Sigmoid colon (tissue), 7 donors: ENCODE measurements at regions of chr7 and their contacts with region 1.

Region 1: GRCh38 chr7:55415173-55415778 is 50.1 kb downstream of the LANCL2 start:
- DNase-seq: peak; percentile 81
- H3K4me3 ChIP-seq: no peak overlapping the region
- H3K27ac ChIP-seq: no peak overlapping the region
- H3K4me1 ChIP-seq: no peaks in the 10 kb centered on the region
- H3K27me3 ChIP-seq: no peaks in the 10 kb centered on the region
- CTCF ChIP-seq: peak; percentile 59 to 85 (median 70)
- EP300 ChIP-seq: no peak
- POLR2A ChIP-seq: no peak

Region 2: DNA sequence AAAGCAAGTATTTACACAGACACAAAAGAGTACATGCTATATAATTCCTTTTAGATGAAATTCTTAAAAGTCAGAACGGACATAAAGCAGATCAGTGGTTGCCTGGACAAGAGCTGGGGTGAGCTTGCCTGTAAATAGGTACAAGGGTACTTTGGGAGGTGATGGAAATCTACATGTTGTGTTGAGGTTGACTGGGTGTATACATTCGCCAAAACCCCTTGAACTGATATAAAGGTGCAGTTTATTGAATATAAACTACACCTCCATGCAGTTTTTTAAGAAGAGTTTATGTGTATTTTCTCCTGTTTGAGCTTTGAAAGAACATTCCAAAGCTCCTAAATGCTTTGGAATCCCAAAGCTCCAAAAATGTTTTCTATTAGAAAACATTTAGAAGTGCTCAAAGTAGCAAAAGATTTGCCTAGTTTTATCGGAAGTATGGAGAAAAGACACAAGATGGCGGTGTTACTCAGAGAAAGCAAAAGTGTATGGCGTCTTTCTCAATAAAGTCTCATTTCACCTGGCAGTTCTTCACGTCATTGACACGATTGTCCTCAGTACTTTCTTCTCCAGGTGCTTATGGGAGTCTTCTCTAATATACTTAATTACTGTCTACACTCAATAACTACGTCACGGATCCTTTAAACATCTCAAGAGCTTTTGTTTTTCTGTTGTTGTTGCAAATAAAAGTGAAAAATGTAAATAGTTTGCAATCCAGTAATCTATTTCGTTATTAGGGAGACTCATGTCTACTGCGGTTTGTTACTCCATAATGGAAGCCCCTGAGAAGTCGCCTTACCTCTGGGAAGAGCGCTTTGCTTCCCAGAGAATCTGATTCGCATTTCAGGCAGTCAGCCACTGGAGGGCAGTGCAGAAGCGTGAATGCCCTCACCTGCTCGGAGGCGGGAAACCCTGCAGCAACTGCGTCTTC is 641.5 kb before region 1 on chr7:
- intact Hi-C with region 1: loop called (anchors 10 kb)
- DNase-seq: peak; percentile 89
- H3K4me3 ChIP-seq: peak overlapping the region; percentile 7 to 42 (median 32)
- H3K27ac ChIP-seq: peak overlapping the region in 1 of 4 donors; percentile 28
- H3K4me1 ChIP-seq: peaks cover 0 to 8% (median 3%) of the 10 kb centered on the region in 4 donors
- H3K27me3 ChIP-seq: peaks cover 0 to 8% (median 0%) of the 10 kb centered on the region in 3 donors
- CTCF ChIP-seq: peak; percentile 63 to 81 (median 73)
- EP300 ChIP-seq: no peak
- POLR2A ChIP-seq: no peak

Region 3: DNA sequence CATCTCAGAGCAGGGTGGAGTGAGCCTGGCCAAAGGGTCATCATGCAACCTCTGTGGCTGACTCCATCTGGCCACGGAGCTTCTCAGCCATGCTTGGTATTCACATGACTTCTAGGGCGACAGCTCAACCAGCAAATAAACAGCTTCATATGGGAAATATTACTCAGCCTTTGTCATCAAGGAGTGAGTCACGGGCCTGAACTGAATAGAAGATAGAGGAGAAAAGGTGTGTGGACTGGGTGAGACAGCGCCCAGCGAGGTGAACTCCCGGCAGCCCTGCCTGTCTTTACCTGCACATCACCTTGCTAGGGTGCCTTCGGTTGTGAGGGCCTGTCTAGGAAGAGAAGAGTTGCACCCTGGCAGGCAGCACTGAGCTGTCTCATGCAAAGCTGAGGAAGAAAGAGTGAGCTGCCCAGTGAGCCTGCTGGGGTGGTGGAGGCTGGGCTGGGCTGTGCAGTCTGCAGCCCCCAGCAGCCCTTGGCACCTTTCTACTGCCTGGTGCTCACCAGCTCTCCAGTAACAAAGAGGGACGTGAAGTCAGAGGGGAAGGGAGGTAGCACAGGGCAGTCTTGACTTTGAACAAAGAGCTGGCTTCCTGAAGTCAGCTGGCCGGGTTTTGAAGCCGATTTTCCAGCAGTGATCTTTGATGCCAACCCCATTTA is 282.3 kb before region 1 on chr7:
- intact Hi-C with region 1: no loop called
- DNase-seq: peak; percentile 83
- H3K4me3 ChIP-seq: no peak overlapping the region
- H3K27ac ChIP-seq: peak overlapping the region; percentile 81 to 90 (median 87)
- H3K4me1 ChIP-seq: peaks cover 0 to 64% (median 61%) of the 10 kb centered on the region in 4 donors
- H3K27me3 ChIP-seq: no peaks in the 10 kb centered on the region
- CTCF ChIP-seq: no peak
- EP300 ChIP-seq: peak in 2 of 4 donors; percentile 36 to 80
- POLR2A ChIP-seq: no peak

Region 4: GRCh38 chr7:55400191-55400590 is 15.1 kb before region 1 on chr7:
- intact Hi-C with region 1: no loop called
- DNase-seq: no peak
- H3K4me3 ChIP-seq: no peak overlapping the region
- H3K27ac ChIP-seq: no peak overlapping the region
- H3K4me1 ChIP-seq: no peaks in the 10 kb centered on the region
- H3K27me3 ChIP-seq: no peaks in the 10 kb centered on the region
- CTCF ChIP-seq: no peak
- EP300 ChIP-seq: no peak
- POLR2A ChIP-seq: no peak